PC-9 (cell line): ENCODE measurements at regions of chr11 and their contacts with region 1.

Region 1: DNA sequence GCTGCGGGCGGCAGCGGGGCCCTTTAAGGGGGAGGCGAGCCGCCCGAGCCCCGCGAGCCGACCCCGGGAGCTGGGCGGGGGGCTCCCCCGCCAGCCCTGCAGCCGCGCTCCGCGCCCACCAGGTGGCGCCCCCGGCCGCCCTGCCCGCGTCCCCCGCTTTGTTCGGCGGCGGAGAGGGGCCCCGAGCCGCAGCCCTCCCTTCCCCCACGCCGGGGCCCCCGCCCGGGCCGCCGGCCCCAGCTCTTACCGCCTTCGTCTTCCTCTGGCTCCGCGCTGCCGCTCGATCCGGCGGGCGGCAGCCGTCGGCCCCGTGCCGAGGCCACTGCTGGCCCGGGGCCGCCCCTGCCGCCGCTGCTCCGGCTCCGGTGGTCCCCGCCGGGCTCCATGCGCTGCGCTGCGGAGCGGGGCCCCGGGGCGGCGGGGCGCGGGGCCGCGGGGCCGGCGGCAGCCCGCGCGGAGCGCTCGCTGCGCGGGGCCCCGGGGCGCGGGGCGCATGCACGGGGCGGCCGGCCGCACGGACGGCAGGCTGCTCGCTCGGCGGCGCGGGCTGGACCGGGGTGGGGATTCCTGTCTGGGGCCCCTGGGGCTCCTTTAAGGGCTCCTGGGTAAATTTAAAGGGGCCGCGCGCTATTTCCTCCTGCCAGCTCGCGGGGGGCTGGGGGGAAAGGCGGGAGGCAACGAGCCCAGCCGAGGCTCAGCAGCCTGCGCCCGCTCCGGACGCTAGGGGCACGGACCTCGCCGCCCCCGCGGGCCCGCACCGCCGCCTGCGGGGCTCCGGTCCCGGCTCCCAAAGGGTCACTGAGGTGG is at the start of gene ZFTA:
- DNase-seq: peak; percentile 57 to 70
- H3K4me3 ChIP-seq: peak within 1 kb of the TSS; percentile 73
- H3K27ac ChIP-seq: no peak within 1 kb of the TSS
- H3K4me1 ChIP-seq: peaks cover 11% of the 10 kb centered on the region; the same call in 1 of the 2 replicates
- H3K27me3 ChIP-seq: no peaks in the 10 kb centered on the region
- CTCF ChIP-seq: 0 out of 2 replicates have a peak, but pooled peaks have one; percentile 24
- total RNA-seq, gene ZFTA: 16.6 and 19.3 TPM in 2 replicates

Region 2: DNA sequence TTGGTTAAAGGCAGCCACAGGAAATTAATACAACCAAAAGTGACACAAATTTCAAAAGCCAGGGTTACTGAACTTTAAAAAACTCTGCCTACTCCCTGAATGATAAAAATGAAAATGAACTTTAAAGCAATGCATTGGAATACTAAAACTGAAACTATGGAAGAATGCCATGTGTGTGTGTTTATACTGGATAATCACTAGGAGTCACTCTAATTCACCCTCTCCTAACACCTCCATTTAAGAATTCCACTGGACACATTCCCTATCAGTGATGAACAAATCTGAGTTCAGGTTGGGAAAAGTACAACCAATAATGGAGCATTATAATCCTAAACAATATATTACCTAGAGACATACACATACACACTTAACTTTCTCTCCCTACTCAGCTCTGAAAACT is 126.7 kb before region 1 on chr11:
- CTCF ChIA-PET with region 1: no interaction called
- POLR2A ChIA-PET with region 1: no interaction called
- intact Hi-C with region 1: no loop called
- DNase-seq: no peak
- H3K4me3 ChIP-seq: no peak overlapping the region
- H3K27ac ChIP-seq: no peak overlapping the region
- H3K4me1 ChIP-seq: no peaks in the 10 kb centered on the region
- H3K27me3 ChIP-seq: no peaks in the 10 kb centered on the region
- CTCF ChIP-seq: peak; percentile 31; the same call in 1 of the 2 replicates

Region 3: GRCh38 chr11:63813035-63813562 is 44.7 kb after region 1 on chr11 and contains the start of gene SPINDOC:
- CTCF ChIA-PET with region 1: no interaction called
- POLR2A ChIA-PET with region 1: no interaction called
- intact Hi-C with region 1: loop called (anchors 1 kb)
- DNase-seq: peak in 1 of 2 experiments; percentile 84
- H3K4me3 ChIP-seq: peak within 1 kb of the TSS; percentile 99
- H3K27ac ChIP-seq: no peak within 1 kb of the TSS
- H3K4me1 ChIP-seq: peaks cover 17% of the 10 kb centered on the region
- H3K27me3 ChIP-seq: no peaks in the 10 kb centered on the region
- CTCF ChIP-seq: no peak
- total RNA-seq, gene SPINDOC: 46.8 and 49.7 TPM in 2 replicates

Region 4: GRCh38 chr11:63838678-63839507 is 70.5 kb after region 1 on chr11 and contains the start of gene MARK2:
- CTCF ChIA-PET with region 1: interaction called, 5 read pairs
- POLR2A ChIA-PET with region 1: interaction called, 5 read pairs
- intact Hi-C with region 1: loop called (anchors 1 kb)
- DNase-seq: peak; percentile 96 to 99
- H3K4me3 ChIP-seq: peak within 1 kb of the TSS; percentile 90
- H3K27ac ChIP-seq: peak within 1 kb of the TSS; percentile 39
- H3K4me1 ChIP-seq: peaks cover 53% of the 10 kb centered on the region
- H3K27me3 ChIP-seq: no peaks in the 10 kb centered on the region
- CTCF ChIP-seq: no peak
- total RNA-seq, gene MARK2: 53.8 and 65.0 TPM in 2 replicates

Region 5: GRCh38 chr11:63945477-63946163 is 177.2 kb after region 1 on chr11:
- CTCF ChIA-PET with region 1: interaction called, 6 read pairs
- POLR2A ChIA-PET with region 1: interaction called, 3 read pairs
- intact Hi-C with region 1: loop called (anchors 1 kb)
- DNase-seq: peak; percentile 66 to 74
- H3K4me3 ChIP-seq: no peak overlapping the region
- H3K27ac ChIP-seq: no peak overlapping the region
- H3K4me1 ChIP-seq: peaks cover 7% of the 10 kb centered on the region; the same call in 1 of the 2 replicates
- H3K27me3 ChIP-seq: no peaks in the 10 kb centered on the region
- CTCF ChIP-seq: peak; percentile 83

Region 6: DNA sequence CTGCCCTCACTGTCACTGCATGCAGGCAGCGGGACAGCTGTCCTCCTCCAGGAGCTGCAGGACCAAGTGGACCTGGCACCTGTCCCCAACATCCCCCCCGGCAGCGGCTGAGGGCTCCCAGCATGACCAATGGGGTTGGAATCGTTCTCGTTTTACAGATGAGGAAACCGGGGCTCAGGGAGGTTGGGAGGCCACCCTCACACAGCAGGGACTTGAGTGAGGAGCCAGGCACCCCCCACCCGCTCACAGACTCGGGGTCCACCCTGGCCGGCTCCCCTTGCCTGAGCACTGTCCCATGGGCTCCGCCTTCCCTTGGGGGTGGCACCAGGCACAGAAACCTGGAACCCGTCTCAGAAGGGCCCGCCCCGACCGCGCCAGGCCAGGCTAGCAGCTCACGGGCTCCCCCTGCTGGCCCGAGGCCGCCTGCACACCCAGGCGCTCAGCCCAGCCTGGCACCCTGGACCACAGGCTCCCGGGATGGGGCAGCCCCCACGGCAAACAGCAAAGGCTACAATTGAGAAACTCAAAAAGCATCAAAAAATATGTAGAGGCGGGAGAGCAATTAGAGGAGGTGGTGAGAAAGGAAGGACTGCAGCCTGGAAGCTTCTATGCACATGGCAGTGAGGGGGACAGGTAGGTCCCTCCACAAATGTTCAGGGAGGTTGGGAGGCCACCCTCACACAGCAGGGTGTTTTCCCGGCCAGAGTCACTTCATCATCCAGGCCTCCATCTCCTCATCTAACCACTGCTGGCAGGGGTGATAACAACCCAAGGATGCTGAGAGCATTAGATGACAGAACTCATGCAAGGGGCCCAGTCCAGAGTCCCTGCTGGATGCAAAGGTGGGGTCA is 384.6 kb after region 1 on chr11:
- CTCF ChIA-PET with region 1: no interaction called
- POLR2A ChIA-PET with region 1: no interaction called
- intact Hi-C with region 1: loop called (anchors 1 kb)
- DNase-seq: peak in 1 of 2 experiments; percentile 78
- H3K4me3 ChIP-seq: no peak overlapping the region
- H3K27ac ChIP-seq: no peak overlapping the region
- H3K4me1 ChIP-seq: no peaks in the 10 kb centered on the region
- H3K27me3 ChIP-seq: no peaks in the 10 kb centered on the region
- CTCF ChIP-seq: peak; percentile 100